HCT116 (cell line): ENCODE measurements at regions of chr2 and their contacts with region 1.

Region 1: GRCh38 chr2:121897335-121897970 is 142.0 kb downstream of the TSN start:
- DNase-seq: peak; percentile 34
- ATAC-seq: peak; percentile 97
- H3K4me3 ChIP-seq: no peak overlapping the region
- H3K27ac ChIP-seq: no peak overlapping the region
- H3K4me1 ChIP-seq: no peaks in the 10 kb centered on the region
- H3K27me3 ChIP-seq: no peaks in the 10 kb centered on the region
- CTCF ChIP-seq: peak; percentile 42 to 76 (median 75); a peak in 5 of 6 replicates
- POLR2A ChIP-seq: no peak
- RAD21 ChIP-seq: peak; percentile 59

Region 2: GRCh38 chr2:121810959-121811853 is 86.2 kb before region 1 on chr2:
- CTCF ChIA-PET with region 1: interaction called, 11 read pairs
- POLR2A ChIA-PET with region 1: no interaction called
- RAD21 ChIA-PET with region 1: no interaction called
- intact Hi-C with region 1: no loop called
- DNase-seq: peak; percentile 35
- ATAC-seq: peak; percentile 97
- H3K4me3 ChIP-seq: no peak overlapping the region
- H3K27ac ChIP-seq: no peak overlapping the region
- H3K4me1 ChIP-seq: no peaks in the 10 kb centered on the region
- H3K27me3 ChIP-seq: peaks cover 2% of the 10 kb centered on the region; the same call in 1 of the 2 replicates
- CTCF ChIP-seq: peak; percentile 38 to 65 (median 55); a peak in 5 of 6 replicates
- POLR2A ChIP-seq: no peak
- RAD21 ChIP-seq: peak; percentile 73

Region 3: DNA sequence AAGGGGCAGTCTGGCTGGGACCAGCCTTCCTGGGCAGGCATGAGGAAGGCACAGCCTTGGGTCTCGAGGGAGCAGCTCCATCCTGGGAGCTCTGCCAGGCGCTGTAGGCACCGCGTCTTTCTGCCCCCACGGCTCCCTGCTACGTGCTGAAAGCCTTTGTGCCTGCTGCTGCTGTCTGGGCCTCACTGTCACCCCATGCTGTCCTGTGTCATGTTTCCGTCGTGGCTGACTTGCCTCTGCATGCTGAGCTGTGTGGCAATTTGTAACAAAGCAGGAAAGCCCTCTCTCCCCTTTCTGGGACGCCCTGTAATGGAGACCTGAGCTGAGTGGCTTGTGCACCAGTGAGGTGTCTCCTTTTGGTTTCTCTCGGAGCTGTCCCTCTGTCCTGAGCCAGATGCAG is 10.5 kb after region 1 on chr2:
- CTCF ChIA-PET with region 1: interaction called, 10 read pairs
- POLR2A ChIA-PET with region 1: no interaction called
- RAD21 ChIA-PET with region 1: no interaction called
- intact Hi-C with region 1: no loop called
- DNase-seq: no peak
- ATAC-seq: no peak
- H3K4me3 ChIP-seq: no peak overlapping the region
- H3K27ac ChIP-seq: no peak overlapping the region
- H3K4me1 ChIP-seq: no peaks in the 10 kb centered on the region
- H3K27me3 ChIP-seq: peaks cover 36% of the 10 kb centered on the region
- CTCF ChIP-seq: no peak
- POLR2A ChIP-seq: no peak
- RAD21 ChIP-seq: no peak